PC-3 (cell line): ENCODE measurements at regions of chr3 and their contacts with region 1.

Region 1: DNA sequence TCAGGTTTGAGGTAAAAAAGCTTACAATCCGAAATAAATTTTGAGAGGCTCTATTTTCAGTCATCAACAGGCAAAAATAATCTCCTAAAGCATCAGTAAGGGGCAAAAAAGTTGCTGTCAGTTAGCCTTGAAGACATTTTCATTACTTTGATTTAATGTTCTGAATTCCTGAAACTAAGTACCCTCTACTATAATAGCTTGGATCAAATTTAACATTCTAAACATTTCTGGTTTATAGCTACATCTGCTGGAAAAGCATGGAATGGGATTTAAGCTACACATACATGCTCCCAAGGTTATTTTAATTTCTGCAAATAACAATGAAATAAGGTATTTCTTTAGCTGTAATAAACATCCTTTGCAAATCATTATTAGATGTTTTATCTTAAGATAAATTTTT is 245.4 kb downstream of the ULK4 start:
- DNase-seq: peak; percentile 44
- ATAC-seq: peak; percentile 66
- H3K4me3 ChIP-seq: no peak overlapping the region
- H3K27ac ChIP-seq: no peak overlapping the region
- H3K4me1 ChIP-seq: no peaks in the 10 kb centered on the region
- H3K27me3 ChIP-seq: no peaks in the 10 kb centered on the region
- CTCF ChIP-seq: peak; percentile 63

Region 2: DNA sequence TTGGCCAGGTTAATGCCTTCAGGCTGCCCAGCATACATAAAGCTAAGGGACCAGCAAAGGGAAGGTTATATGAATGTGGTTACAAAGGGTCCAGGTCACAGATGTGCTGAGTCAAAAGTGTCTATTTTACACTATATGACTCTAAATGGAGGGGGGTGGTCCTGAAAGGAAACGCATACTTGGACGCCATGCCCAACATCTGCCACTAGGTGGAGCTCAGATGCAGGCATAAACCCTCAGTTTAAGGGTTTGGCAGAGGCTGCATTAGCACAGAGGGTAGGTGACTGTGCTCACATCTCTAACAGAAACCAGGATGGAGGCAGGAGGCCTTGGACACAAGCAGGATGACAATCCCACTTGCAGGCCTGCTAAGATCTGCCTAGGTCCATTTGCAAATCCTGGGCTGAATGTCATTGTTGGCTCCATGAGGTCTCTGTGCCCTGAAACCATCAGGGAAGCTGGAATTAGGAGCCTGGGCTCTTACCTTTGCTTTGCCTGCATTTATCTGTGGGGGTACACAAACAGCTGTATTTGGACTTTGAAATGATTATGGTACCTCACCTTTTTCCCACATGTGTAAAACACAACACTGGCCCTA is 1135.9 kb before region 1 on chr3:
- CTCF ChIA-PET with region 1: no interaction called
- POLR2A ChIA-PET with region 1: no interaction called
- intact Hi-C with region 1: loop called (anchors 1 kb)
- DNase-seq: peak; percentile 87
- ATAC-seq: peak; percentile 77
- H3K4me3 ChIP-seq: no peak overlapping the region
- H3K27ac ChIP-seq: no peak overlapping the region
- H3K4me1 ChIP-seq: no peaks in the 10 kb centered on the region
- H3K27me3 ChIP-seq: peaks cover 37% of the 10 kb centered on the region
- CTCF ChIP-seq: peak; percentile 98

Region 3: GRCh38 chr3:41450416-41451231 is 265.8 kb before region 1 on chr3:
- CTCF ChIA-PET with region 1: interaction called, 7 read pairs
- POLR2A ChIA-PET with region 1: no interaction called
- intact Hi-C with region 1: loop called (anchors 2 kb)
- DNase-seq: peak; percentile 44
- ATAC-seq: peak; percentile 76
- H3K4me3 ChIP-seq: no peak overlapping the region
- H3K27ac ChIP-seq: no peak overlapping the region
- H3K4me1 ChIP-seq: no peaks in the 10 kb centered on the region
- H3K27me3 ChIP-seq: no peaks in the 10 kb centered on the region
- CTCF ChIP-seq: peak; percentile 55

Region 4: DNA sequence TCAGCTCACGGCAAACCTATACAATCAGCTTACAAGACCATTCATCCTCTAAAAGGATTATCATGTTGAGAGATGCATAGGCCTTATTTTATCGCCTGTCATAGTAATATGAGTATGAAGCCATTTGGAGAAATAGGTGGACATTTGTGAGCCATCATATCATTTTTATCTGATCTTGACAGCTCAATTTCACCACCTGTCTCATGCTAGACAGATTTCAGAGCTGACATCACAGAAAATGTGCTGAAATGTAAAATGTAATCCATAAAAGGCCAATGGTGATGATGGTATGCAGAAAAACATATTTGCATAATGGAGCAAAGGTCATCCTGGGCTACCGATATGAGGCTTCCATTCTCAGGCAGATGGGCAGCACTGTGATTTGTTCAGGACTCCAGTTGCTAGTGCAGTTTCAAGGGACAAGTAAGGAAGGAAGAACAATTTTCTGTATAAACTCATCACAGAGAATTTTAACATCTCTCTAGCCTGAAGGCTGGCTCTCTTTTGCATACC is 24.0 kb after region 1 on chr3:
- CTCF ChIA-PET with region 1: no interaction called
- POLR2A ChIA-PET with region 1: no interaction called
- intact Hi-C with region 1: no loop called
- DNase-seq: no peak
- ATAC-seq: no peak
- H3K4me3 ChIP-seq: no peak overlapping the region
- H3K27ac ChIP-seq: no peak overlapping the region
- H3K4me1 ChIP-seq: no peaks in the 10 kb centered on the region
- H3K27me3 ChIP-seq: no peaks in the 10 kb centered on the region
- CTCF ChIP-seq: no peak